ENCODE measurements at regions of chr7 and their contacts with region 1.

Region 1: GRCh38 chr7:50793115-50793946 is 10.6 kb upstream of the GRB10 start:
- DNase-seq: peak; percentile 76 to 88
- ATAC-seq: peak; percentile 74 to 85 (median 79)
- H3K4me3 ChIP-seq: peak overlapping the region; percentile 79
- H3K27ac ChIP-seq: peak overlapping the region; percentile 80
- H3K4me1 ChIP-seq: peaks cover 22% of the 10 kb centered on the region
- H3K27me3 ChIP-seq: no peaks in the 10 kb centered on the region
- CTCF ChIP-seq: no peak

Region 2: GRCh38 chr7:50653126-50653864 is 140.0 kb before region 1 on chr7:
- intact Hi-C with region 1: loop called in 1 of 2 experiments (anchors 10 kb)
- DNase-seq: peak; percentile 73 to 87
- ATAC-seq: peak; percentile 20 to 61 (median 48)
- H3K4me3 ChIP-seq: peak overlapping the region; percentile 37
- H3K27ac ChIP-seq: peak overlapping the region; percentile 96
- H3K4me1 ChIP-seq: peaks cover 63% of the 10 kb centered on the region
- H3K27me3 ChIP-seq: no peaks in the 10 kb centered on the region
- CTCF ChIP-seq: no peak

Region 3: GRCh38 chr7:50733555-50733954 is 59.8 kb before region 1 on chr7:
- intact Hi-C with region 1: loop called in 1 of 2 experiments (anchors 5 kb)
- DNase-seq: no peak
- ATAC-seq: peak; percentile 62 to 75 (median 71)
- H3K4me3 ChIP-seq: no peak overlapping the region
- H3K27ac ChIP-seq: peak overlapping the region; percentile 10
- H3K4me1 ChIP-seq: peaks cover 63% of the 10 kb centered on the region
- H3K27me3 ChIP-seq: no peaks in the 10 kb centered on the region
- CTCF ChIP-seq: no peak

Region 4: DNA sequence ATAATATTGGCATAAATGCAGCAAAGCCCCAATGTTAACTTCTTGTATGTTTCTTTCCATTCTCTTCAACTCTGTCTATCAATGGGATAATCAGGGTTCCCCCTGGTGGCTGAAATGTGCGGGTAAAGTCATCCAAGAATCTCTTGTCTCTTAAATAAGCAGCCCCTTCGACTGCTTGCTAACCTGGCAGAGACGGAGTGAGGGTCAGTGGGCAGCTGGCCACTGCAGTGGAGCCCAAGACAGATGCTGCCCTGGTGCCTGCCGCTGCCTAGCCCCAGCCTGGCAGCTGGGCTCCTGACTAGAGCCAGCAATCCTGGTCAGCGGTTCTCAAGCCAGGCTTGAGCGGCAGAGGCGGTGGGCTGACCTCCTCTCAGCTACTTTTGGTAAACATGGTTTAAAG is 274.4 kb after region 1 on chr7:
- intact Hi-C with region 1: loop called (anchors 5 kb)
- DNase-seq: peak in 1 of 2 donors; percentile 43
- ATAC-seq: peak; percentile 53 to 81 (median 64)
- H3K4me3 ChIP-seq: no peak overlapping the region
- H3K27ac ChIP-seq: no peak overlapping the region
- H3K4me1 ChIP-seq: peaks cover 7% of the 10 kb centered on the region
- H3K27me3 ChIP-seq: no peaks in the 10 kb centered on the region
- CTCF ChIP-seq: peak; percentile 78

Region 5: GRCh38 chr7:51123322-51124029 is 330.1 kb after region 1 on chr7:
- intact Hi-C with region 1: loop called in 1 of 2 experiments (anchors 10 kb)
- DNase-seq: peak; percentile 71 to 79
- ATAC-seq: peak; percentile 95 to 100 (median 100)
- H3K4me3 ChIP-seq: no peak overlapping the region
- H3K27ac ChIP-seq: peak overlapping the region; percentile 67
- H3K4me1 ChIP-seq: peaks cover 13% of the 10 kb centered on the region
- H3K27me3 ChIP-seq: no peaks in the 10 kb centered on the region
- CTCF ChIP-seq: no peak